ENCODE measurements at regions of chr10 and their contacts with region 1.

Region 1: DNA sequence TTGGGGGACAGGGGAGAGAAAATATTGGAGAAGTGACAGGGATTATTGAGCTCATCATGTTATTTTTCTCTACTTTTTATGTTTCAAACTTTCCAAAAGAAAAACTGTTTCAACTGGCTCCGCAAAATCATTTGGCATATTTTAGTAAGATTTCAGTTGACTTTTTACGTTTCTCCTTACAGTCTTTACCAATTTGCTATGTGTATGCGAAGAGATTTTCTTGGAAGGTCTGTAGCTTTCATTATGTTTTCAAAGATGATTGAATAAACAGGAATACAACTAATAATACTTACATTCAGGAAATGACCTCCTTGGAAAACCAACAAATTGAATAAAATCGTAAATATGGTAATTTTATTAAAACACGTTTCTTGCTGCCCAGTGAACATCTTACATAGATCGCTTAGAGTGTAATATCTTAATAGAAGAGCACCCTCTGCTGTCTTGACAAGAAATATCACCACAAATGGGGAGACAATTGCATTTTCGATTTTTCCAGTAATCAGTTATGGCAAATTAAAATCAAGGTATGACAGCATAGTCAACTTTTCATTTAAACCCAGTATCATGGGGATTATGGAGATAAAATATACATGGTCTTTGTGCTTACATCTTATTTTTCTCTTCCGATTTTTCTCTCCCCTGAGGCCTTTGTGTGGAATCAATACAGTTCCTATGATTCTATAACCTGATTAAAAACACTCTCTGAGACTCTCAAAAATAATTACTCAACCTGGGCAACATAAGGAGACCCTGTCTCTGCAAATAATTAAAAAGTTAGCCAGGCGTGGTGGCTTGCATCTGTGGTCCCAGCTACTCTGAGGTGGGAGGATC is 43.1 kb downstream of the MBL2 start:
- DNase-seq: no peak
- ATAC-seq: peak; percentile 66 to 75 (median 69)
- H3K4me3 ChIP-seq: no peak overlapping the region
- H3K27ac ChIP-seq: no peak overlapping the region
- H3K4me1 ChIP-seq: no peaks in the 10 kb centered on the region
- H3K27me3 ChIP-seq: no peaks in the 10 kb centered on the region
- CTCF ChIP-seq: peak; percentile 49 to 57 (median 56)
- POLR2A ChIP-seq: no peak

Region 2: GRCh38 chr10:52652431-52653262 is 76.8 kb before region 1 on chr10:
- intact Hi-C with region 1: loop called in 1 of 2 experiments (anchors 10 kb)
- DNase-seq: no peak
- ATAC-seq: no peak
- H3K4me3 ChIP-seq: no peak overlapping the region
- H3K27ac ChIP-seq: no peak overlapping the region
- H3K4me1 ChIP-seq: no peaks in the 10 kb centered on the region
- H3K27me3 ChIP-seq: no peaks in the 10 kb centered on the region
- CTCF ChIP-seq: no peak
- POLR2A ChIP-seq: no peak

Measured in right lobe of liver (tissue), 6 donors.